Breast epithelium (tissue), 4 donors: ENCODE measurements at regions of chr4 and their contacts with region 1.

Region 1: GRCh38 chr4:133287396-133287795 is 138.3 kb downstream of the PCDH10 start:
- DNase-seq: no peak
- H3K4me3 ChIP-seq: no peak overlapping the region
- H3K27ac ChIP-seq: no peak overlapping the region
- H3K4me1 ChIP-seq: no peaks in the 10 kb centered on the region
- H3K27me3 ChIP-seq: no peaks in the 10 kb centered on the region
- CTCF ChIP-seq: no peak
- POLR2A ChIP-seq: no peak

Region 2: GRCh38 chr4:134883831-134884449 is 1596.5 kb after region 1 on chr4:
- intact Hi-C with region 1: loop called (anchors 5 kb)
- DNase-seq: no peak
- H3K4me3 ChIP-seq: no peak overlapping the region
- H3K27ac ChIP-seq: no peak overlapping the region
- H3K4me1 ChIP-seq: no peaks in the 10 kb centered on the region
- H3K27me3 ChIP-seq: no peaks in the 10 kb centered on the region
- CTCF ChIP-seq: no peak
- POLR2A ChIP-seq: no peak